Activated naive CD4-positive, alpha-beta T cell treated with anti-CD3 and anti-CD28 coated beads for 36 hours (primary cell): ENCODE measurements at regions of chr7 and their contacts with region 1.

Region 1: DNA sequence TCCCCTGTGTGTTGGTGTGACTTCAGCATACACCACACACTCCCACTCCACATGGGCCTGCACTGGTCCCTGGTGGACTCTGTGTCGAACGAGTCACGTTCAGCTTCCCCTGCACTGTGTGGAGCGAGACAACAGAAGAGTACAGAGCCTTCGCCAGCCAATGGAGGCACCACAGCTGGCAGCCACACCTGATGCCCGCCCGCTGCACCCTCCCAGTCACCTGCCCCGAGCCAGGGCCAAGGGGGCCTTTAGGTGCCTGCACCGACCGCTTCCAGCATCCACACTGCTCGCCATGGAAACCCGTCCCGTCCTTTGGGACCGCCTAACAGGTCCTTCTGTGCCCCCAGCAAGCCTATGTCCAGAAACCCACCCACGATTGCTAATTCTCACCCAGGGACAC is 9.2 kb downstream of the FOXL3 start:
- DNase-seq: no peak
- H3K4me3 Mint-ChIP-seq: no peak overlapping the region
- H3K27ac Mint-ChIP-seq: no peak overlapping the region
- H3K4me1 Mint-ChIP-seq: no peaks in the 10 kb centered on the region
- H3K27me3 Mint-ChIP-seq: peaks cover 4% of the 10 kb centered on the region

Region 2: GRCh38 chr7:271266-272107 is 27.7 kb before region 1 on chr7:
- CTCF ChIA-PET with region 1: no interaction called
- intact Hi-C with region 1: loop called (anchors 1 kb)
- DNase-seq: no peak
- H3K4me3 Mint-ChIP-seq: no peak overlapping the region
- H3K27ac Mint-ChIP-seq: no peak overlapping the region
- H3K4me1 Mint-ChIP-seq: no peaks in the 10 kb centered on the region
- H3K27me3 Mint-ChIP-seq: no peaks in the 10 kb centered on the region

Region 3: DNA sequence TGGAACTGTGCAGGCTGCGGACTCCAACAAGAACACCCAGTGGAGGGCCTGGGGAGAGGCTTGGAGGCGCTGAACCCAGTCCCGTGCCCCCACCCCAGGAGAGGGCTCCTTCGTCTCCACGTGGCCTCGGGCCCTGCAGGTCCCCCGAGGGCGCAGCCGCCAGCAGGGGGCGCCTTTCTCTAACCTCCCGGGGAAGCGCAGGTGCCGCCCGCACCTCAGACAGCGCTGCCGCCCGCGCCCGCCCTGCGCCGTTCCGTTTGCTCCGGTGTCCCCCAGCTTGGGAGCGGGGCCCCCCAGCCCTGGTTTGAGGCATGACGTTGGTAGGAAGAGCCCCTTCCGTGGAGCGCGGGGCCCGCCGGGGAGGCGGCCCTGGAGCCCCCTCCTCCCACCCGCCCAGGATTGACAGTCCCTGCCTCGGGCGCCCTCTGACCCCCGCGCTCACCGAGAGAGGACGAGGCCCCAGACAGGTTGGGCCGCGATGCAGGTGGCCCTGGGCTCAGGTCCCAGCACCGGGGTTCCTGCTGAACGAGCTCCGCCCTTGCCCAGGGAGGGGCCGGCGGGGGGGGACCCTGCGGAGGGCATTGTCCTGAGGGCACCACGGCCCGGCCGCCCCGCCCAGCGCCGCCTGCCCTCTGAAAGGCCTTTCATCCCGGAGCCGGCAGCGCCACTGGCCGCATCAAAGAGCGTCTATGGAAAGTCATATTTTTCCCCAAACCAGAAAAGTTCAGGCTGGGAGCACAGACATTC is 33.6 kb after region 1 on chr7:
- CTCF ChIA-PET with region 1: no interaction called
- intact Hi-C with region 1: no loop called
- DNase-seq: peak; percentile 94
- H3K4me3 Mint-ChIP-seq: no peak overlapping the region
- H3K27ac Mint-ChIP-seq: no peak overlapping the region
- H3K4me1 Mint-ChIP-seq: peaks cover 7% of the 10 kb centered on the region
- H3K27me3 Mint-ChIP-seq: no peaks in the 10 kb centered on the region